ENCODE measurements at regions of chr9 and their contacts with region 1.

Region 1: GRCh38 chr9:124708633-124709291 is 62.3 kb downstream of the NR6A1 start:
- DNase-seq: no peak
- ATAC-seq: no peak
- H3K4me3 ChIP-seq: no peak overlapping the region
- H3K4me3 Mint-ChIP-seq: no peak overlapping the region
- H3K27ac ChIP-seq: no peak overlapping the region
- H3K27ac Mint-ChIP-seq: no peak overlapping the region
- H3K4me1 ChIP-seq: peaks cover 0 to 2% of the 10 kb centered on the region in 2 donors
- H3K4me1 Mint-ChIP-seq: no peaks in the 10 kb centered on the region
- H3K27me3 ChIP-seq: no peaks in the 10 kb centered on the region
- H3K27me3 Mint-ChIP-seq: no peaks in the 10 kb centered on the region
- CTCF ChIP-seq: no peak

Region 2: DNA sequence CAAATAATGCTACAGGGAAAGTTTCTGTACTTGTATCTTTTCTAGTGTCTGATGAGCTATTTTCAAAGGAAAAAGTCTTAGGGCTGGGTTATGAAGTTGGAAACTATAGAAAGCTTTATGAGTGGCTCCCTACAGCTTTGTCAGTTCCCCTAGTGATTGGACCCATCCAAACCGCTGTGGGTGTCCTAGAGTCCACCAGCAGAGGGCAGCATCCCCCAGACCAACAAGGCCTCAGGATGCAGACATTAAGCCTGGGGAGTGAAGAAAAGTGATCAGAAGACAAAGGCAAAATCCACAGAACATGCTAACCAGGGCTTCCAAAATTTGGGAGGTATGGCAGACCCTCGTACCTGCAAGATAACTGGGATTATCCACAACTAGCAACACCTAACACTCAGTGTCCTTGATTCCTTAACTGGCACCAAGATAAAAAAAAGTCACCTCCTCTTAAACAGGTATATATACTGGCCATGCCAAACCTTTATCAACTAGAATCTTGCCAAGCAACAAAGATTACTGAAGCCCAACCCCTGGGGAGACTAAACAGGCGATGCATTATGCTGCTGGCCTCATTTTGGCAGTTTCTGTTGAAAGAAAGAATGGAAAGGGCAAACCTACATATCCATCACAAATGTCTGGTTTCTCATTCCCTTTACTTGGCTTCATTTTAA is 91.2 kb before region 1 on chr9:
- CTCF ChIA-PET with region 1: interaction called, 87 read pairs
- POLR2A ChIA-PET with region 1: no interaction called
- intact Hi-C with region 1: no loop called
- DNase-seq: peak; percentile 76
- ATAC-seq: peak; percentile 61
- H3K4me3 ChIP-seq: no peak overlapping the region
- H3K4me3 Mint-ChIP-seq: no peak overlapping the region
- H3K27ac ChIP-seq: no peak overlapping the region
- H3K27ac Mint-ChIP-seq: no peak overlapping the region
- H3K4me1 ChIP-seq: no peaks in the 10 kb centered on the region
- H3K4me1 Mint-ChIP-seq: no peaks in the 10 kb centered on the region
- H3K27me3 ChIP-seq: no peaks in the 10 kb centered on the region
- H3K27me3 Mint-ChIP-seq: no peaks in the 10 kb centered on the region
- CTCF ChIP-seq: peak; percentile 84

Region 3: GRCh38 chr9:124658165-124659017 is 50.4 kb before region 1 on chr9:
- CTCF ChIA-PET with region 1: interaction called, 6 read pairs
- POLR2A ChIA-PET with region 1: no interaction called
- intact Hi-C with region 1: loop called (anchors 5 kb)
- DNase-seq: peak; percentile 69
- ATAC-seq: peak; percentile 91
- H3K4me3 ChIP-seq: peak overlapping the region; percentile 52 to 83 (median 61)
- H3K4me3 Mint-ChIP-seq: peak overlapping the region; percentile 98
- H3K27ac ChIP-seq: peak overlapping the region in 1 of 2 donors; percentile 74
- H3K27ac Mint-ChIP-seq: peak overlapping the region; percentile 73
- H3K4me1 ChIP-seq: peaks cover 13 to 14% of the 10 kb centered on the region in 2 donors
- H3K4me1 Mint-ChIP-seq: peaks cover 26% of the 10 kb centered on the region
- H3K27me3 ChIP-seq: no peaks in the 10 kb centered on the region
- H3K27me3 Mint-ChIP-seq: no peaks in the 10 kb centered on the region
- CTCF ChIP-seq: no peak

Region 4: DNA sequence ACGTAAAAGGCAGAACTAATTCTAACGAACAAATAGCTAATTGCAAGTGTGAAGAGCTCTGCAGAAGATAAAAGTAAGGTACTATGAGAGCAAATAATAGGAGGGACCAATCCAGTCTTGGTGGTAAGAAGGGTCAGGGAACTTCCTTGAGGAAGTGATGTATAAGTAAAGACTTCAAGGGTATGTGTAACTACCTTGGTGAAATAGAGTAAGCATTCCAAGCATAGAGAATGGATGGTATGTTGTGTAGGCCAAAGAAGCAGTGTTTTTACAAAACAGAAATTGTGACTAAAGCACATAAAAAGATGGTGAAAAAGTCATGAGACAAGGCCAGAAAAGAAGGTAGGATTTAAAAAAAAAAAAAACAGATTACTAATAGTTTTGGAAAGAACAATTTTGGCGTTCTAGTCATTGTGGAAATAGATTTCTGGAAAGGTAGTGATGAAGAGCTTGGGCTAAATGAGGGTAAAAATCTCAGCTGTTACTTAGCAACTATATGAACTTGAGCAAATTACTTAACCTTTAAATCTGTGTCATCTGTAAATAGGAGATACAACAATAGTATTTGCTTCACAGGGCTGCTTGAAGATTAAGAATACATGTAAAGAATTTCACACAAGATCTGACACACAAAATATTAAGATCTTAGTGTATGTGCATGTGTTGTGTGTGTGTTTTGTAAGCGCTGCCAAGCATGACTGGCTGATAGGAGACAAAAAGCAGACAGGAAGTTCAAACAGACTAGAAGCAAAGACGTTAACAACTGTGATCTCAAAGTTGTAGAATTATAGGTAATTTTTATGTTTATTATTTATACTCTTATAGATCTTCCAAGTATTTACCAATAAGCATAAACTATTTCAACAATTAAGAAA is 11.2 kb before region 1 on chr9:
- CTCF ChIA-PET with region 1: interaction called, 12 read pairs
- POLR2A ChIA-PET with region 1: no interaction called
- intact Hi-C with region 1: no loop called
- DNase-seq: no peak
- ATAC-seq: no peak
- H3K4me3 ChIP-seq: no peak overlapping the region
- H3K4me3 Mint-ChIP-seq: no peak overlapping the region
- H3K27ac ChIP-seq: no peak overlapping the region
- H3K27ac Mint-ChIP-seq: no peak overlapping the region
- H3K4me1 ChIP-seq: no peaks in the 10 kb centered on the region
- H3K4me1 Mint-ChIP-seq: no peaks in the 10 kb centered on the region
- H3K27me3 ChIP-seq: no peaks in the 10 kb centered on the region
- H3K27me3 Mint-ChIP-seq: no peaks in the 10 kb centered on the region
- CTCF ChIP-seq: no peak

Region 5: DNA sequence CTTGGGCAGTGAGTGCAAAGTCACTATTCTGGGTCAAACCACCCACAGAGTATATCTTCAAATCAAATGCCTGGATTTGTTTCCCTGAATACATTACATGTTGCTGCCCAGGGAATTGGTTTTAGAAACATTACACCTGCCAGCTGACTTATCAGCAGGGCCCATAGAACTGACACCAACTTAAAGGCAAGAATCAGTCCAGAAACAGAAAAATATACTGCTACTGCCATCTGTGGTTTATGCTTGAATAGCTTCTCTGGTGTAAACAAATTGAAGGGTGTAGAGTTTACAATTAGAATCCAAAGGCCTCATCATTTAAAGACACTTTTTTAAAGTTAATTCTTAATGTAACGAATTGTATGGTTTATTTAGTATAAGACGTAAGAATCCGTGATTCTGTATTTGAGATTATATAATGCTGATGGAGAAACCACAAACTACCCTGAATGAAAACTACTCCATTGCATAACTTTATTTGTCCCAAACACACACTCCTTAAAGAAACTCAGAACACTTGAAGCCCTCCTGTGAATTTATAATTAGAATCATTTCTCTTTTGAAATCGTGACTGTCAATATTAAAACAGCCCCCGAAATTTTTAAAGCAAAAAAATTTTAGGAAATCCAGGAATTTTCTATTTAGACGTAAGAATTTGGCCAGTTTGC is 56.1 kb after region 1 on chr9:
- CTCF ChIA-PET with region 1: interaction called, 8 read pairs
- POLR2A ChIA-PET with region 1: interaction called, 3 read pairs
- intact Hi-C with region 1: loop called (anchors 2 kb)
- DNase-seq: peak; percentile 41
- ATAC-seq: peak; percentile 51
- H3K4me3 ChIP-seq: no peak overlapping the region
- H3K4me3 Mint-ChIP-seq: no peak overlapping the region
- H3K27ac ChIP-seq: no peak overlapping the region
- H3K27ac Mint-ChIP-seq: no peak overlapping the region
- H3K4me1 ChIP-seq: peaks cover 12 to 16% of the 10 kb centered on the region in 2 donors
- H3K4me1 Mint-ChIP-seq: peaks cover 20% of the 10 kb centered on the region
- H3K27me3 ChIP-seq: peaks cover 0 to 37% (median 26%) of the 10 kb centered on the region in 4 experiments
- H3K27me3 Mint-ChIP-seq: peaks cover 50% of the 10 kb centered on the region
- CTCF ChIP-seq: no peak

Region 6: GRCh38 chr9:124852829-124853531 is 144.2 kb after region 1 on chr9 and contains the start of gene WDR38:
- CTCF ChIA-PET with region 1: interaction called, 11 read pairs
- POLR2A ChIA-PET with region 1: no interaction called
- intact Hi-C with region 1: loop called (anchors 1 kb)
- DNase-seq: peak; percentile 88
- ATAC-seq: peak; percentile 80
- H3K4me3 ChIP-seq: peak within 1 kb of the TSS in 4 of 5 experiments; percentile 33 to 55 (median 48)
- H3K4me3 Mint-ChIP-seq: peak within 1 kb of the TSS; percentile 88
- H3K27ac ChIP-seq: peak within 1 kb of the TSS in 1 of 2 donors; percentile 74
- H3K27ac Mint-ChIP-seq: peak within 1 kb of the TSS; percentile 84
- H3K4me1 ChIP-seq: peaks cover 7 to 9% of the 10 kb centered on the region in 2 donors
- H3K4me1 Mint-ChIP-seq: peaks cover 8% of the 10 kb centered on the region
- H3K27me3 ChIP-seq: no peaks in the 10 kb centered on the region
- H3K27me3 Mint-ChIP-seq: no peaks in the 10 kb centered on the region
- CTCF ChIP-seq: peak; percentile 99
- total RNA-seq, gene WDR38: not detected in 2 replicates

Region 7: GRCh38 chr9:125374443-125375309 is 665.9 kb after region 1 on chr9:
- CTCF ChIA-PET with region 1: no interaction called
- POLR2A ChIA-PET with region 1: no interaction called
- intact Hi-C with region 1: loop called (anchors 5 kb)
- DNase-seq: peak; percentile 75
- ATAC-seq: peak; percentile 91
- H3K4me3 ChIP-seq: peak overlapping the region in 3 of 5 experiments; percentile 15 to 38 (median 15)
- H3K4me3 Mint-ChIP-seq: peak overlapping the region; percentile 66
- H3K27ac ChIP-seq: no peak overlapping the region
- H3K27ac Mint-ChIP-seq: no peak overlapping the region
- H3K4me1 ChIP-seq: peaks cover 7 to 10% of the 10 kb centered on the region in 2 donors
- H3K4me1 Mint-ChIP-seq: peaks cover 7% of the 10 kb centered on the region
- H3K27me3 ChIP-seq: peaks cover 0 to 32% (median 3%) of the 10 kb centered on the region in 4 experiments
- H3K27me3 Mint-ChIP-seq: peaks cover 7% of the 10 kb centered on the region
- CTCF ChIP-seq: peak; percentile 77